Ascending aorta (tissue), 2 donors: ENCODE measurements at regions of chr1 and their contacts with region 1.

Region 1: DNA sequence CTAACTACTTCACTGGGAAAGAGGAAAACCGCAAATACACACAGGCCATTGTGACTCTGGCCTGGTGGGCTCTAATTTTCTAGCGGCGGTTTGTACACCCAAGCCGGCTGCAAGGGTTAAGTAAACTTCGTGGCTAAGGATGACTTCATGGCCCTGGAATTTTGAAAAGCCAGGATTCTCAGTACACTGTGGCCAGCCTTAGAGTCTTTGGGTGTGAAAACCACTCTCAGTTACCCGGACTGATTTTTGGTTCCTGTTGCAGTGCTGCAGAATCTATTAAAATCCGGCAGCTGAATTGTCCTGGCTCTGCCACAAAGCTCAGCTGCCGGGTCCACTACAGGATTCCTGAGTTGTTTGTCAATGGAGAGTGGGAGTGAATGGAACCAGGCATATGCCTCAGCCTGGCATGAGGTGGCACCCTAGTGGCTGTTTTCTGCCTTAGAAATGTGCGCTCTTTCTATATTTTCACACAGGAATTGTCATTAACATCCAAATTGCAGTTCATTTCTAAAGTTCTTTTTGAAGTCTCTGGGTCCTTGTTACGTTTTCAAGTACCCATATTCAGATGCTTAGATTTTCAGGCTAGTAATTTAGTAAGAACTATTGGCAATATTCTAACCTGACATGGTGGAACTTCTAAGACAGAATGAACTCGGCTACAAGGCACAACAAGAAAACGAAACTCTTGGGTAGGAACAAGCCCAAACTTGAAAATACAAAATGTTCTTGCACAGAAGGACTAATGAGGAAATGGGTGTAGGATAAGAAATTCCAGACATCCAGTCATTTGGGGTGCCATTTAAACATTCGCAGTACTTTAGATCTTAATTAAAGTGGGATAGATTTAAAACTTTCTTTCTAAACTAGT is 255.9 kb downstream of the NFIA start:
- DNase-seq: peak; percentile 38 to 92
- H3K4me3 ChIP-seq: peak overlapping the region; percentile 27 to 54
- H3K27ac ChIP-seq: peak overlapping the region; percentile 86 to 88
- H3K4me1 ChIP-seq: peaks cover 3 to 45% of the 10 kb centered on the region in 2 donors
- H3K27me3 ChIP-seq: no peaks in the 10 kb centered on the region
- CTCF ChIP-seq: peak; percentile 71 to 80 (median 75)

Region 2: DNA sequence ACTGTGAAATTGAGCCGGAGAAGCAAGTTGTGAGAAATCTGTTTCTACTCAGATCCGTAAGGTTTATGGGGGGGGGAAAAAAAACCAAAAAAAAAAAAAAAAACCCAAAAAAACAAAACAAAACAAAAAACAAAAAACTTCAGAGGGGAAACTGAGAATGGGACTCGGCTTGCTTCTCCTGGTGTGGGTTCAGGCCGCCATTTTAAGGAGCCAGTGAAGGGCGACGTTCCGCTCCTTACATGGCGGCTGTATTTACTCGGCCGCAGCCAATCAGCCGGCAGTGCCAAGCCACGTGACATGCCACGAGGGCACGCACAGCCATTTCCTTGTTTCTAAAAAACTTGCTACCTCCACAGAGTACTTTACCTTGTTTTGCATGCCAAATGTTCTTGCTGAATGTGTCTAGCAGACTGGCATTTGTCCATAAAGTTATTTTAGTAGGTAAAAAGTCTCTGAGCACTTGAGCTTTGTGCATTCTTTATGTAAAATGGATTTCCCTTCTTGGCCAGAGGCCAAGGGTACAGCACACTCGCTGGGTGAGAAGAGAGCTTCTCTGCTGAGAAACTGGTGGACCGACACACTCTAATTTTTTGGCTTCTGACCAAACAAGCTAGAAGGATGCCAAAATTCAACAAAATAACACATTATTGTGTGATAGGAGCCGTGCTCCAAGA is 154.0 kb before region 1 on chr1:
- intact Hi-C with region 1: loop called (anchors 5 kb)
- DNase-seq: peak; percentile 75 to 96
- H3K4me3 ChIP-seq: peak overlapping the region; percentile 56 to 58
- H3K27ac ChIP-seq: peak overlapping the region; percentile 84 to 92
- H3K4me1 ChIP-seq: peaks cover 9 to 82% of the 10 kb centered on the region in 2 donors
- H3K27me3 ChIP-seq: no peaks in the 10 kb centered on the region
- CTCF ChIP-seq: no peak

Region 3: DNA sequence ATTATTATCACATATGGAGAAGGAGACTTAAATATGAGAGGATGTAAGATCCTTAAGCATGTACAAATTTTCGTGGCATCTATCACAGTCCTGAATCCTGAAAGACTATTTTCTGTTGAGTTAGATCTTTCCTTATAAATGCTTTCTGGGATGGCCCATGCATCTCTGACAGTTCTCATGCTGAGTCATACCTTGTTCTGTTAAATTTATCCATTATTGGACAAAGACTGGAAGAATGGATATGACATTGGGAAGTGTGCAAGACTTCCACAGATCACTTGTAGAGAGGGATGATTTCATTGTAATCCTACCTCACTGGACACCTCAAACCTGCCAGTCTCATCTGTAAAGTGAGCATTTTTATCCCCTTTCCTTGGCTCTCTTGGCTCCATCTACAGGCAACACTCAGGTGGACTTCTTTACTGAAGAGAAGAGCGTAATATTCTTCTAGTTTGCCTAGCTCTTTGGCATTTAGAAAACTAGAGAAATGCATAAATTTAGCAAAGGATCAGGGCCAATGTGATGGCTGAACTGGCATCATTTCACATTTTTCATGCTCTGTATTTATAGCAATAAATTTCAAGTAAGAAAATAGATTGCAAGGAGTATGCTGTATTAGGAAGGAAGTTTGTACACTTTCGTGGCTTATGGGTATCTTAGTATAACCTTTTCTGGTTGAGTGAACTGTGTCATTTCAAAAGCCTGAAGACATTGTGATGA is 127.6 kb before region 1 on chr1:
- intact Hi-C with region 1: no loop called
- DNase-seq: no peak
- H3K4me3 ChIP-seq: peak overlapping the region in 1 of 2 donors; percentile 11
- H3K27ac ChIP-seq: peak overlapping the region; percentile 51 to 58
- H3K4me1 ChIP-seq: peaks cover 6 to 43% of the 10 kb centered on the region in 2 donors
- H3K27me3 ChIP-seq: no peaks in the 10 kb centered on the region
- CTCF ChIP-seq: peak in 1 of 3 experiments; percentile 29

Region 4: DNA sequence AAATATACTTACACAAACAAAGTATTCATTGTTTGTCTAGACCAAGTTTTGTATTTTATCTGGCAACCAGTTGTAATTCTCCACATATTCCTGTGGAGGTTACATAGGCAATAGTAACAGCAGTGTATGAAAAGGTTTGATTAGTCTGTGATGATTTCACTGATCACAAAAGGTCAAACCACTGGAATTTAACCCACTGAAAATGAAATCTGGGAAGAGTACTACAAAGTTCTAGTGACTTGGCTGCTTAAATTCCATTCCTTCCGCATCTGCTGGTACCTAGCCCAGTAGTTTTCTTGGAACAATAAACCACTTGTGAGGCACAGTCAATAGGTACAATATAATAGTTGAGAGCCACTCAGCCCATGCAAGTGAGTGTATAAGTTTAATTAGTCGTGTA is 50.5 kb before region 1 on chr1:
- intact Hi-C with region 1: loop called (anchors 2 kb)
- DNase-seq: no peak
- H3K4me3 ChIP-seq: no peak overlapping the region
- H3K27ac ChIP-seq: peak overlapping the region; percentile 69 to 76
- H3K4me1 ChIP-seq: peaks cover 4 to 54% of the 10 kb centered on the region in 2 donors
- H3K27me3 ChIP-seq: no peaks in the 10 kb centered on the region
- CTCF ChIP-seq: no peak